Naive thymus-derived CD8-positive, alpha-beta T cell (primary cell): ENCODE measurements at regions of chr1 and their contacts with region 1.

Region 1: GRCh38 chr1:24996983-24997893 is 67.2 kb upstream of the RUNX3 start:
- DNase-seq: peak; percentile 38 to 88 (median 68)
- ATAC-seq: peak; percentile 80 to 83
- H3K4me3 Mint-ChIP-seq: peak overlapping the region; percentile 7 to 87 (median 68)
- H3K27ac Mint-ChIP-seq: peak overlapping the region; percentile 92 to 100 (median 96)
- H3K4me1 Mint-ChIP-seq: peaks cover 43 to 92% (median 89%) of the 10 kb centered on the region in 4 donors
- H3K27me3 Mint-ChIP-seq: no peaks in the 10 kb centered on the region

Region 2: GRCh38 chr1:24909388-24909898 is 87.8 kb before region 1 on chr1:
- POLR2A ChIA-PET with region 1: no interaction called
- DNase-seq: no peak
- ATAC-seq: no peak
- H3K4me3 Mint-ChIP-seq: peak overlapping the region in 8 of 10 donors; percentile 16 to 78 (median 44)
- H3K27ac Mint-ChIP-seq: peak overlapping the region; percentile 96 to 100 (median 99)
- H3K4me1 Mint-ChIP-seq: peaks cover 28 to 81% (median 69%) of the 10 kb centered on the region in 4 donors
- H3K27me3 Mint-ChIP-seq: no peaks in the 10 kb centered on the region

Region 3: DNA sequence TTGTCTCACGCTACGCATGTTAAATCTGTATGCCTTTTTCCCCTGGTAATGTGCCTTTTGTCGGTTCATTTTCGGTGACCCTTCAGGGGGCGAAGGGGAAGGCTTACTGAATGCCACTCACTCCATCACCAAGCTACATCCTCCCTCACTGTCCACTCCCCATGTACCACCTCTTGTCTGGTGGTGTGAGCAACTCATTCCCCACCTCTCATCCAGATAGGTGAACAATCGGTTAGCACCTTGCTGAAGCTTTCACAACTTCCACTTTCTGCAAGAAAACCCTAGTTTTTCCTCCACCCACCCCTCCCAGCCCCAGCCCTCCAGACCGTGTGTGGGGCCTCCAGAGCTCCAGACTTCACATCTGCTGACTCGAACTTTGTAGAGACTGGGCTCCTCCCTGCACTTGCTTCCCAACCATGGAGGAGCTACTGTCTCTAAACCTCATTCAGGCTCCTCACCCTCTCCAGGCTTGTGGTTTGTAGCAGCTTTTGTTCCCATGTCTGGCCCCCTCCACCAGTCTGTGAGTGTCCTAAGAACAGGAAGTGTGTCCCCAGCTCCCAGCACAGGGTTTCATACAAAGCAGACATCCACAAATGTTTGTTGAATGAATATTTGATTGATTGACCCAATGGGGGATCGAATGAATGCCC is 18.7 kb before region 1 on chr1:
- POLR2A ChIA-PET with region 1: interaction called, 68 read pairs
- DNase-seq: no peak
- ATAC-seq: no peak
- H3K4me3 Mint-ChIP-seq: peak overlapping the region in 5 of 10 donors; percentile 16 to 47 (median 24)
- H3K27ac Mint-ChIP-seq: peak overlapping the region in 9 of 10 donors; percentile 61 to 88 (median 74)
- H3K4me1 Mint-ChIP-seq: peaks cover 48 to 79% (median 73%) of the 10 kb centered on the region in 4 donors
- H3K27me3 Mint-ChIP-seq: no peaks in the 10 kb centered on the region

Region 4: DNA sequence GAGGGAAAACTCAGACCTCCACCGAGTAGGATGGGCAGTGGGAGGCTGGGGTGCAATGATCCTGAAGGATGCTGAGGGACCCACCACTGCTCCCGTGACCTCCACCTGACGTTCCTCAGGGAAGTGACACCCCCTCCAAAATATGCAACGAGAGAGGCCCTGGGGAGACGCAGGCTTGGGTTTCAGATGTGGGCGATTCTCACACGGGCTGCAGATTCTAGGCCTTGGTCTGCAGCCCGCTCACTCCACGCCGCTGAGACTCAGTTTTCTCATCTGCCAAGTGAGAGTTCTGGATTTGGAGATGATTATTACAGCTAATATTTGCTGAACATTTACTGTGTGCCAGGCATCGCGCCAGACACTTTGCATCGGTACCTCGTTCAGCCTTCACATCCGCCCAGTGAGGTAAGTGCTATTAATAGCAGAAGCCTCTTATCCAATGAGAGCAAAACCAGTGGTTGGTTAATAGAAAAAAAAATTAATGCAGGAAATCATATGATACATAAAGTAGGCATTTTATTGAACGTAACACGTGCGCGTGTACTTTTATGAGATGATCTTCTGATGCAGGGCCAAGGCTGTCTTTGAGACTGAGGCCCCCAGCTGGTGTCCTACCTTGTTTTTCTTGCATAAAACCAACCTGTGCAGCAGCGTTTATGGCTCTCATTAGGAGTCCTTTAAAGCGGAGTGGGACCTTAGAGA is 34.9 kb after region 1 on chr1:
- POLR2A ChIA-PET with region 1: interaction called, 18 read pairs
- DNase-seq: peak in 9 of 10 donors; percentile 54 to 86 (median 68)
- ATAC-seq: peak; percentile 58 to 88
- H3K4me3 Mint-ChIP-seq: peak overlapping the region; percentile 54 to 81 (median 69)
- H3K27ac Mint-ChIP-seq: peak overlapping the region in 8 of 10 donors; percentile 95 to 98 (median 96)
- H3K4me1 Mint-ChIP-seq: peaks cover 6 to 73% (median 42%) of the 10 kb centered on the region in 4 donors
- H3K27me3 Mint-ChIP-seq: no peaks in the 10 kb centered on the region

Region 5: DNA sequence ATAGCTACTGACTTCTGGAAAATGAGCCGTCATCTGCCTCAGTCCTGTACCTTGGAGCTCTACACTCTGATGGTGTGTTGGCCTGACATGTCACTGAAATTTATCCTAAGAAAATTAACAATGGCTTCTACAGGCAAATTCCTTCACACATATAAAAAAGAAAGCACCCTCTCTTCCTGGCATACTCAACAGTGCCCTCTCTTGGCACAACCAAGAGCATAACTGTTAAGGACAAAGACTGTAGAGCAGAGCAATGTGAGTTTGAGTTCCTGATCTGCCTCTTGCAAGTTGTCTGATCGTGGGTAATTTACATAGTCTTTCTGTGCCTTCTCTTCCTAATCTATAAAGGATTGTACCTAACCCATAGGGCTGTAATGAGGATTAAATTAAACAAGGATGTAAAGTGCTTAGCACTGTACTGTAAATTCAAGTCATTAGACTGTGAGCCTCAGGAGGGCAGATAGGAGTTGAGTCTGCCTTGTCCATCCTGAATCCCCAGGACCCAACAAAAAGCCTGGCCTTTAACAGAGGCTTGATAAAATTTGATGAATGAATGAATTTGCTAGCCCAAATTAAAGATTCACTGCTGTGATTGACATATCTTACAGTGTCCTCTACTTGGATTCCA is 151.5 kb after region 1 on chr1:
- POLR2A ChIA-PET with region 1: no interaction called
- DNase-seq: peak in 9 of 10 donors; percentile 14 to 70 (median 41)
- ATAC-seq: peak; percentile 68 to 73
- H3K4me3 Mint-ChIP-seq: no peak overlapping the region
- H3K27ac Mint-ChIP-seq: peak overlapping the region in 1 of 10 donors; percentile 24
- H3K4me1 Mint-ChIP-seq: peaks cover 4 to 8% (median 7%) of the 10 kb centered on the region in 4 donors
- H3K27me3 Mint-ChIP-seq: peaks cover 2 to 30% (median 9%) of the 10 kb centered on the region in 5 donors